ENCODE measurements at regions of chr4 and their contacts with region 1.

Region 1: GRCh38 chr4:177410571-177410970 is 31.7 kb downstream of the AGA start:
- DNase-seq: peak; percentile 44 to 46
- H3K4me3 ChIP-seq: no peak overlapping the region
- H3K4me3 Mint-ChIP-seq: no peak overlapping the region
- H3K27ac Mint-ChIP-seq: no peak overlapping the region
- H3K4me1 ChIP-seq: peaks cover 7% of the 10 kb centered on the region; the same call in 1 of the 2 replicates
- H3K4me1 Mint-ChIP-seq: peaks cover 10% of the 10 kb centered on the region
- H3K27me3 ChIP-seq: no peaks in the 10 kb centered on the region
- H3K27me3 Mint-ChIP-seq: no peaks in the 10 kb centered on the region
- CTCF ChIP-seq: no peak

Region 2: DNA sequence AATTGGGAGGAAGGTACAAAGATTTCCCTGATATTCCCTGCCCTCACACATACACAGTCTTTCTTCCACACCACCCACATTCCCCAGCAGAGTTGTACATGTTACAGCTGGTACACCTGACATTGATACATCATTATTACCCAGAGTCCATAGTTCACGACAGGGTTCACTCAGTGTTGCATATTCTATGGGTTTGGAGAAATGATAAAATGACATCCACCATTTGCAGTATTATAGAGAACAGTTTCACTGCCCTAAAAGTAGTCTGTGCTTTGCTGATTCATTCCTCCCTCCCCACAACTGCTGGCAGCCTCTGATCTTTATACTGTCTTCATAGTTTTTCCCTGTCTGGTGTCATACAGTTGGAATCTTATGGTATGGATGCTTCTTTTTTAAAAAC is 16.6 kb after region 1 on chr4:
- CTCF ChIA-PET with region 1: no interaction called
- POLR2A ChIA-PET with region 1: no interaction called
- intact Hi-C with region 1: loop called (anchors 2 kb)
- DNase-seq: no peak
- H3K4me3 ChIP-seq: no peak overlapping the region
- H3K4me3 Mint-ChIP-seq: no peak overlapping the region
- H3K27ac Mint-ChIP-seq: no peak overlapping the region
- H3K4me1 ChIP-seq: peaks cover 4% of the 10 kb centered on the region; the same call in 1 of the 2 replicates
- H3K4me1 Mint-ChIP-seq: no peaks in the 10 kb centered on the region
- H3K27me3 ChIP-seq: no peaks in the 10 kb centered on the region
- H3K27me3 Mint-ChIP-seq: no peaks in the 10 kb centered on the region
- CTCF ChIP-seq: no peak